ENCODE measurements at regions of chr9 and their contacts with region 1.

Region 1: DNA sequence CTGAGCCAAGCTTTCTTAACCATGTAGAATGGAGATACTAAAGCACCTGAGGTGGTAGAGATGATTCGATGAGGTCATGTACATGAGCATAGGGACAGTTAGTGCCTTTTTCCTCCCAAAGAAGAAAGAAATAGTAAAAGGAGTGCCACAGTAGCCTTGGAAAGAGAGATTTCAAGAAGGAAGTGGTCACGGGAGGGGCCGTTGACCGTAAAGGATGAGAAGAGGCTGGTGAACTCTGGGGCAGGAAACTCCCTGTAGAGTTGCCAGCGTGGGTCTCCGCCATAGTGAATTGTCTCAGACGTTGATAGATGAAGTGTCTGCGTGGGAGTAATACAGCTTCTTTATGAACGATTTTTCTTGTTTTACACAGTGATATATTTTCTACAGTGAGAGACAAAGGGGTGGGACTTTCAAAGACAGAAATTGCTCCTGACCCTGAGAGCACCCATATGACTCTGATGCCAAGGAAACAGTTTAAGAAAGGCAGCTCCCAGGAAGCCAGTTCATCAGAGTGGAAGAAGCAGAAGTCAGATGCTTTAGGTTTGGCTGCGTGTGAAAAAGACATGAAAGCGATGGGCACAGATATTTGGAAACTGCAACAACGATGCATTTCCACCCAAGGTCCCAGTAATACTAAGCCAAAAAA is 41.3 kb downstream of the UGCG start:
- DNase-seq: peak; percentile 17 to 79 (median 55)
- ATAC-seq: peak; percentile 90
- H3K4me3 ChIP-seq: peak overlapping the region in 1 of 2 experiments; percentile 10
- H3K4me3 Mint-ChIP-seq: peak overlapping the region; percentile 73
- H3K27ac ChIP-seq: peak overlapping the region in 1 of 2 experiments; percentile 56
- H3K27ac Mint-ChIP-seq: peak overlapping the region; percentile 94
- H3K4me1 ChIP-seq: peaks cover 21% of the 10 kb centered on the region
- H3K4me1 Mint-ChIP-seq: peaks cover 22% of the 10 kb centered on the region
- H3K27me3 ChIP-seq: no peaks in the 10 kb centered on the region
- H3K27me3 Mint-ChIP-seq: no peaks in the 10 kb centered on the region
- CTCF ChIP-seq: no peak

Region 2: DNA sequence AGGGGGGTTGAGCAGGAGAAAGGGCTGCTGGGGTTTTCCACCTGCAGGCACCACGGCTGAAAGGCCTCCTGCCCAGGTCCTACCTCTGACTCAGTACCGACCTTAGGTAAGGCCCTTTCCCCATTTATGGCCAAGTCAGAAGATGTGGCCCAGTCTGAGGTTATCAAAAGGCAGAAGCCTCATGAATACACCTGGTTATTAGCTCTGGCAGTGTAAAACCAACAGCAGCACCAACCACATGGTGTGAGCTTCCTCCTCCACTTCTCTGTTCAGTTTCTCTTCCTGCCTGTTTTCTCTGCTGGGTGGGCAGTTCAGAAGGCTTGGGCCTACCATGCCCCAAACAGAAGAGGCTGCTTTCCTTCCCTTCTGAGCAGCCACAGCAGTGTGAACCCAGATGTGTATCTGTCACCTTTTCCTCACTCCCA is 45.6 kb after region 1 on chr9:
- CTCF ChIA-PET with region 1: interaction called, 3 read pairs
- POLR2A ChIA-PET with region 1: no interaction called
- intact Hi-C with region 1: loop called in 1 of 2 experiments (anchors 10 kb)
- DNase-seq: peak in 2 of 9 experiments; percentile 12 to 35
- ATAC-seq: no peak
- H3K4me3 ChIP-seq: no peak overlapping the region
- H3K4me3 Mint-ChIP-seq: no peak overlapping the region
- H3K27ac ChIP-seq: no peak overlapping the region
- H3K27ac Mint-ChIP-seq: no peak overlapping the region
- H3K4me1 ChIP-seq: peaks cover 32% of the 10 kb centered on the region
- H3K4me1 Mint-ChIP-seq: peaks cover 42% of the 10 kb centered on the region
- H3K27me3 ChIP-seq: no peaks in the 10 kb centered on the region
- H3K27me3 Mint-ChIP-seq: no peaks in the 10 kb centered on the region
- CTCF ChIP-seq: no peak